GM12878 (cell line): ENCODE measurements at regions of chr12 and their contacts with region 1.

Region 1: GRCh38 chr12:94101738-94102660 is 46.4 kb upstream of the PLXNC1 start:
- DNase-seq: peak; percentile 56
- ATAC-seq: peak; percentile 93
- H3K4me3 ChIP-seq: peak overlapping the region; percentile 78
- H3K27ac ChIP-seq: no peak overlapping the region
- H3K4me1 ChIP-seq: no peaks in the 10 kb centered on the region; the same call in 1 of the 2 replicates
- H3K27me3 ChIP-seq: peaks cover 0 to 2% of the 10 kb centered on the region in 2 experiments; a peak in 2 of 4 replicates
- CTCF ChIP-seq: peak; percentile 79 to 97 (median 82); a peak in 5 of 6 replicates
- EP300 ChIP-seq: no peak
- POLR2A ChIP-seq: no peak
- RAD21 ChIP-seq: peak; percentile 93

Region 2: DNA sequence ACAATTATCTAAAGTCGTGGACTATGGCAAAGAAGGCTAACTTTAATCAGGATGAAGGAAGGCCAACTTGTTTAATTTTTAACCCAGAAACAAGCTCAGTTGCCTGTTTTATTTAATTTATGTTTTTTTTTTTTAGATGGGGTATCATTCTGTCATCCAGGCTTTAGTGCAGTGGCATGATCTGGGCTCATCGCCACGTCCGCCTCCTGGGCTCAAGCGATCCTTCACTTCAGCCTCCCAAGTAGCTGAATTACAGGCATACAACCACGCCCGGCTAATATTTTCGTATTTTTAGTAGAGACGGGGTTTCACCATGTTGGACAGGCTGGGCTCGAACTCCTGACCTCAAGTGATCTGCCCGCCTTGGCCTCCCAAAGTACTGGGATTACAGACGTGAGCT is 704.6 kb before region 1 on chr12:
- CTCF ChIA-PET with region 1: no interaction called
- POLR2A ChIA-PET with region 1: no interaction called
- RAD21 ChIA-PET with region 1: no interaction called
- SMC1A ChIA-PET with region 1: interaction called, 5 read pairs
- in situ Hi-C with region 1: no loop called
- intact Hi-C with region 1: loop called (anchors 5 kb)
- DNase-seq: no peak
- ATAC-seq: no peak
- H3K4me3 ChIP-seq: no peak overlapping the region
- H3K27ac ChIP-seq: no peak overlapping the region
- H3K4me1 ChIP-seq: no peaks in the 10 kb centered on the region; the same call in 1 of the 2 replicates
- H3K27me3 ChIP-seq: no peaks in the 10 kb centered on the region
- CTCF ChIP-seq: no peak
- EP300 ChIP-seq: no peak
- POLR2A ChIP-seq: no peak
- RAD21 ChIP-seq: no peak

Region 3: DNA sequence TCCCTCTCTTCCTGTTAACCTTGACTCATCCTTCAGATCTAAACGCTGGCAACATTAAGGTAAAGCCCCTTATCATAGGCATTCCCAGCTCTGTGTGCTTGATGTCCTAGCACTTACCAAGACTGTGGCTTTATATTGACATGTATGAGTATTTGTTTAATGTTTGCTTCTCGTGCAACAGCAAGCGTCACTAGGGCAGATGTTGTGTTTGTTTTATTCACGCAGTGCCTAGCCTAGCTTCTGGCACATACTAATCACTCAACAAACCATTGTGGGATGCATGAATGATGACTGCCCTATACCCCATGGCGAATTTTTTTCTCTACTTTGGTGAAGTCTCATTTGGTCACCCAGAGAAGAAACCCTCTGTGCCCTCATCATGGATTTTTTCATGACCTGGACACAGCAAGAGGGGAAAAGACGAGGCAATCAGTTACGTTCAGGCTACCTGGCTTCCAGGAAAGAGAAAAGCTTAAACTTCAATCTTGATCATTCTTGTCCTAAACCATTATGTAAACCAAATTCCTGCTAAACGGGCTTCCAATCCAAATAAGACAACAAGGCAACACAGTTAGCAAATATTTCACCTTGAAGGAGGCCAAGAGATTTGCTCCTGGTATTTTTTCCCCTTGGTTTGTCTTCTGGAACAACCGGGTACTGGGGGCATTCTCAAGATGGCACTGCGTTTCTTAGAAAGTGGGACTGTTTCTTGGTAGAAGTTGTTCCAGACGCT is 577.4 kb before region 1 on chr12:
- CTCF ChIA-PET with region 1: interaction called, 16 read pairs
- POLR2A ChIA-PET with region 1: no interaction called
- RAD21 ChIA-PET with region 1: interaction called, 5 read pairs
- SMC1A ChIA-PET with region 1: interaction called, 7 read pairs
- in situ Hi-C with region 1: no loop called
- intact Hi-C with region 1: loop called (anchors 1 kb)
- DNase-seq: no peak
- ATAC-seq: no peak
- H3K4me3 ChIP-seq: no peak overlapping the region
- H3K27ac ChIP-seq: no peak overlapping the region
- H3K4me1 ChIP-seq: no peaks in the 10 kb centered on the region
- H3K27me3 ChIP-seq: peaks cover 0 to 4% of the 10 kb centered on the region in 2 experiments; a peak in 2 of 4 replicates
- CTCF ChIP-seq: no peak
- EP300 ChIP-seq: no peak
- POLR2A ChIP-seq: no peak
- RAD21 ChIP-seq: no peak

Region 4: DNA sequence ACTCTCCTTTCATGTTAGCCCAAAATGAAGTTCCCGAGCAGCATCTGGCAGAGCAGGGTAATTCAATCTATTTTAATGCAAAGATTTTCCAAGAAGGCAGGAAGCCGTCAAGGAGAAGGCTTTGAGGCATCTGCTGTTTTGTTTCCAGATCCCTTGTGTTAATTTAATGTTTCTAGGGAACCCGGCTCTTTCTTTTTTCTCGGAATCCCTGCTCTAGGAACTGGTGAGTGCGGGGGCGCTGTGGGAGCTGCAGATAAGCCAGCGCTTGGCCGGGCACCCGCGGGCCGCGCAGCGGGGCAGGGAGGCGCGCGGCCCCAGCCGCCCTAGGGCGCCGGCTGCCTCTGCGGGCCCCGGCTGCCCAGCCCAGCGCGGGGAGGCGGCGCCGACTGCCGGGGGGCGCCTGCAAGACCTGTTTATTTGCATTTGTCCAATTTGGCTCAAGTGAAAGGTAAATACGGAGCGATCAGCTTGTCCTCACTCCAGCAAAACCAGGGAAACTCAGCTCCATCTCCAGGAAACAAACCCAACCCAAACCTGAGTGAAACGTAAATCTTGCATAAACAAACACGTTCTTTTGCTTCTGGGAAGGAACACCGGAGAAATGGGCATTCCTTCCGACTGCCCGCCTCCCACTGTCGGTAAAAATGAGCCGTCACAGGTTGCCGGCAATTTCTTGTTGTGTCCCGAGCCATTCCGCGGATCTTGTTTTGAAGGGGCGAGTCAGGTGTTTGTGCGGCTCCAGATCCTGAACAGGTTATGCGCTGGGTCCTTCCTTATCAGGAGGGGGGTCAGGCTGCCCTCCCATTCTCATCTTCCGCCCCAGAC is 359.7 kb before region 1 on chr12:
- CTCF ChIA-PET with region 1: interaction called, 13 read pairs
- POLR2A ChIA-PET with region 1: no interaction called
- RAD21 ChIA-PET with region 1: no interaction called
- SMC1A ChIA-PET with region 1: no interaction called
- in situ Hi-C with region 1: no loop called
- intact Hi-C with region 1: no loop called
- DNase-seq: no peak
- ATAC-seq: peak; percentile 99
- H3K4me3 ChIP-seq: peak overlapping the region; percentile 67
- H3K27ac ChIP-seq: no peak overlapping the region
- H3K4me1 ChIP-seq: no peaks in the 10 kb centered on the region
- H3K27me3 ChIP-seq: no peaks in the 10 kb centered on the region
- CTCF ChIP-seq: peak; percentile 28 to 58 (median 37); a peak in 4 of 6 replicates
- EP300 ChIP-seq: no peak
- POLR2A ChIP-seq: peak; percentile 31; the same call in 1 of the 2 replicates
- RAD21 ChIP-seq: peak; percentile 84

Region 5: DNA sequence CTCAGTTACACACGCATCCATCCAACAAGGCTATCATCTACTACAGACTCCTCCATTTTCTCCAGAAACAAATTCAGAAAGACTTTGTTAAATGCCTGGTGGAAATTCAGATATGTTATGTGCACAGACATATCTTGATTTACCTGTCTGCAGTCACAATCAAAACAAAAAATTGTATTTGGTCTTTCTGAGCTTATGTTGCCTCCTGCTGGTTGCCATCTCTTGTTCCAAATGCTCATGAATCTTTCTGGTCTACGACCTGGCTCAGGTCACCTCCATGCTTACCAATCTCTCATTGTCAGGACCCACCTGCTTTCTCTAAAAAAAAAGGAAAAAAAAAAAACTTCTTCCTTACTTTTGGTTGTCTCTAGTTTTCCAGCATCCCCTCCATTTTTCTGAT is 122.8 kb before region 1 on chr12:
- CTCF ChIA-PET with region 1: interaction called, 7 read pairs
- POLR2A ChIA-PET with region 1: no interaction called
- RAD21 ChIA-PET with region 1: interaction called, 6 read pairs
- SMC1A ChIA-PET with region 1: interaction called, 3 read pairs
- in situ Hi-C with region 1: no loop called
- intact Hi-C with region 1: loop called (anchors 5 kb)
- DNase-seq: peak; percentile 8
- ATAC-seq: peak; percentile 42; the same call in 2 of the 3 replicates
- H3K4me3 ChIP-seq: no peak overlapping the region
- H3K27ac ChIP-seq: no peak overlapping the region
- H3K4me1 ChIP-seq: no peaks in the 10 kb centered on the region
- H3K27me3 ChIP-seq: no peaks in the 10 kb centered on the region; a peak in 2 of 4 replicates
- CTCF ChIP-seq: peak; percentile 51 to 65 (median 55)
- EP300 ChIP-seq: no peak
- POLR2A ChIP-seq: no peak
- RAD21 ChIP-seq: peak; percentile 84

Region 6: DNA sequence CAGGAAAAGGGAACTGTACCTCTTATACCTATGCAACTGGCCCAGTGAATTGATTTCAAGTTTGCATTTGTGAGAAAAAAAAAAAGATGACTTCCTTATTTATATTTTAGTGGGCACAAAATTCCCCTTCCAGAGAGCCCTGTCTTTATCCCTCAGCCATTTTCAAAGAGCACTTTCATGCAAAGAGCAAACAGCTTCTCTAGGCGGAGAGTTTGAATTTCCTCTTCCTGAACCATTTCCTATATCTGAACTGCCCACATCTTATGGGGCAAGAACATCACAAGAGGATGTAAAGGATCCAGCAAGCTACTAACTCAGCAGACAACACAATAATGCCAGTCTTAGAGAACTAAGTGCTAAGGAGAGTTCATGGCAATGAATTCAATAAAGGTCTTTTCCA is 24.1 kb after region 1 on chr12:
- CTCF ChIA-PET with region 1: interaction called, 21 read pairs
- POLR2A ChIA-PET with region 1: interaction called, 3 read pairs
- RAD21 ChIA-PET with region 1: interaction called, 5 read pairs
- SMC1A ChIA-PET with region 1: interaction called, 8 read pairs
- in situ Hi-C with region 1: no loop called
- intact Hi-C with region 1: no loop called
- DNase-seq: no peak
- ATAC-seq: no peak
- H3K4me3 ChIP-seq: no peak overlapping the region
- H3K27ac ChIP-seq: no peak overlapping the region
- H3K4me1 ChIP-seq: peaks cover 6% of the 10 kb centered on the region; the same call in 1 of the 2 replicates
- H3K27me3 ChIP-seq: no peaks in the 10 kb centered on the region; a peak in 1 of 4 replicates
- CTCF ChIP-seq: no peak
- EP300 ChIP-seq: no peak
- POLR2A ChIP-seq: no peak
- RAD21 ChIP-seq: no peak